ENCODE measurements at regions of chr6 and their contacts with region 1.

Region 1: GRCh38 chr6:56595490-56596122 is 47.1 kb downstream of the DST start:
- DNase-seq: peak; percentile 17
- H3K4me3 Mint-ChIP-seq: no peak overlapping the region
- H3K27ac Mint-ChIP-seq: no peak overlapping the region
- H3K4me1 Mint-ChIP-seq: peaks cover 29% of the 10 kb centered on the region
- H3K27me3 Mint-ChIP-seq: peaks cover 1% of the 10 kb centered on the region

Region 2: GRCh38 chr6:55980627-55981211 is 614.9 kb before region 1 on chr6:
- intact Hi-C with region 1: loop called (anchors 5 kb)
- DNase-seq: no peak
- H3K4me3 Mint-ChIP-seq: no peak overlapping the region
- H3K27ac Mint-ChIP-seq: no peak overlapping the region
- H3K4me1 Mint-ChIP-seq: no peaks in the 10 kb centered on the region
- H3K27me3 Mint-ChIP-seq: no peaks in the 10 kb centered on the region

Region 3: DNA sequence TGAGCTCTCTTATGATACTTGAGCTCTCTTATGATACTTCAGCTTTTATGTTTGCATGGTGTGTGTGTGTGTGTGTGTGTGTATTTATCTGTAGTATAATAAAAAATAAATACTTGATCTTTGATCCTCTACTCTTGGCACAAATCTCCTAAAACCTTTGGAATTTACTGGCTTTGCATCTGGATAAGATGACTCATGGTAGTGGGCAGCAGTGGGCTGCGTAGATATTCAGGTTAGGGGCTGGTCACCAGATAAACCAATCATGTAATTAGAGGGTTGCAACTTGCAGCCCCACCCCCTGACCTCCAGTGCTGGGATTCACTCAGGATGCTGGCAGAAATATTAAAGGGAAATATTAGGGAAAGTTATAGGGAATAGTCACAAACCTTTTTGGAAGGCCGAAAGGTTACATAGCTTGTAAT is 196.3 kb before region 1 on chr6:
- intact Hi-C with region 1: no loop called
- DNase-seq: no peak
- H3K4me3 Mint-ChIP-seq: no peak overlapping the region
- H3K27ac Mint-ChIP-seq: no peak overlapping the region
- H3K4me1 Mint-ChIP-seq: no peaks in the 10 kb centered on the region
- H3K27me3 Mint-ChIP-seq: peaks cover 5% of the 10 kb centered on the region

Region 4: GRCh38 chr6:56458324-56458884 is 137.2 kb before region 1 on chr6:
- intact Hi-C with region 1: loop called (anchors 1 kb)
- DNase-seq: no peak
- H3K4me3 Mint-ChIP-seq: no peak overlapping the region
- H3K27ac Mint-ChIP-seq: peak overlapping the region; percentile 32
- H3K4me1 Mint-ChIP-seq: peaks cover 5% of the 10 kb centered on the region
- H3K27me3 Mint-ChIP-seq: no peaks in the 10 kb centered on the region

Region 5: DNA sequence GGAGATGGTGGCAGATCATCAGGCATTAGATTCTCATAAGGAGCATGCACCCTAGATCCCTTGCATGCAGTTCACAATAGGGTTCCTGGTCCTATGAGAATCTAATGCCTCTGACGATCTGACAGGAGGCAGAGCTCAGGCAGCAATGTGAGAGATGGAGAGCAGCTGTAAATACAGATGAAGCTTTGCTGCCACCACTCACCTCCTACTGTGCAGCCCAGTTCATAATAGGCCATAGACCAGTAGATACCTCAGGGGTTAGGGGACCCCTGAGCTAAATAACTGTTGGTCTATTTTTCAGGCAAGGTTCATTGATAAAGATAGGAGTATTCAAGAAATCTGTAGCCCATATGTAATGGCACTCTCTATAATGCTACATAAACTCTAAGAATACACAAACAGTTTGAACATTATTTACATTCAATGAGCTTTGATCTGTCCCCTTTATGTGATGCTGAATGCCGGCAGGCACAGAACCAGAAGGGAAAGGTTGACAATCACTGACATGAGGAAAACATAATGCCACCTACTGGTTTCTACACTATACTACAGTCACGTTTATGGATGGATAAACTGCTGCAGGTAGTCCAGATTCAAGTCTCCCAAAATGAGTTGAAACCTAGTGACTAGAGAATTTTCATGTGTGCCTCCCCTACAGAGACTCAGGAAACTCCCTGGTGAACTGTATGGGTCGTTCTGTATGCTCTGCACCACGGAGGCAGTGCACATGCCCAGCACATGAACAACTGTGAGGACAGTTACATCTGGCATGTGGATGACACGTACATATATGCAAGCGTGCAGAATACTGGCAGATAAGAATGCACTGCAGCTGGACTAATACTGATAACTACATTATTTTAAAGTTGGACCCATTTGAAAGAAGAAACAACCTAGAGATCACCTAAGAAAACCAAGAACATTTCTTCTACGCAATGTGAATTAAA is 24.9 kb before region 1 on chr6:
- intact Hi-C with region 1: loop called (anchors 1 kb)
- DNase-seq: no peak
- H3K4me3 Mint-ChIP-seq: no peak overlapping the region
- H3K27ac Mint-ChIP-seq: no peak overlapping the region
- H3K4me1 Mint-ChIP-seq: no peaks in the 10 kb centered on the region
- H3K27me3 Mint-ChIP-seq: peaks cover 2% of the 10 kb centered on the region

Region 6: GRCh38 chr6:56890683-56891429 is 295.2 kb after region 1 on chr6:
- intact Hi-C with region 1: loop called (anchors 2 kb)
- DNase-seq: peak; percentile 5
- H3K4me3 Mint-ChIP-seq: no peak overlapping the region
- H3K27ac Mint-ChIP-seq: peak overlapping the region; percentile 53
- H3K4me1 Mint-ChIP-seq: peaks cover 35% of the 10 kb centered on the region
- H3K27me3 Mint-ChIP-seq: no peaks in the 10 kb centered on the region